Colonic mucosa (tissue), 4 donors: ENCODE measurements at regions of chr10 and their contacts with region 1.

Region 1: DNA sequence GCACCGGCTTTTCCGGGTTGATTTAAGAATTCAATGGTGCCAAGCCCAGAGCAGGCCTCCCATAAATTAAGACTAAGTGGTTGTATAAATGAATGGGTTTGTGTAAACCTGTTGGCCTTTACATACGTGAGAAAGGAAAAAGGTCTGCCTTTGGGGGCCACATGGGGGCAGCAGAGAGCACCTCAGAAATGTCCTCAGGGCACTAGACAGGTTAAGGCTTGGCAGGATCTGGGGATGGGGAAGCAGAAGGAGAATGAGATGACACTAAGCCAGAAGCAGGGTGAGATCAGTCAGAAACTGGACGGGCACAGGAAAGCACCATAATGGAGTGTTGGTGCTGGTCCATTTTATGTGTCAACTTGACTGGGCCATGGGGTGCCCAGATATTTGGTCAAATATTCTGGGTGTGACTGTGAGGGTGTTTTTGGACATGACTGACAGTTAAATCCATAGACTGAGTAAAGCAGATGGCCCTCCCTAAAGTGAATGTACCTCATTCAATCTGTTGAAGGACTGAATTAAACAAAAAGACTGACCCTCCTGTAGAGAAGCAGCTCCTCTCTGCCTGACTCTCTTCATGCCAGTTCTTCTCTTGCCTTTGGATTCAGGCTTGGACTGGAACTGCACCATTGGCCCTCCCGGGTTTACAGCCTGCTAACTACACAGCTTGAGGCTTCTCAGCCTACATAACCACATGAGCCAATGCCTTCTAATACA is 58.9 kb downstream of the FRMPD2 start:
- DNase-seq: peak; percentile 61
- H3K4me3 ChIP-seq: no peak overlapping the region
- H3K27ac ChIP-seq: no peak overlapping the region
- H3K4me1 ChIP-seq: no peaks in the 10 kb centered on the region
- H3K27me3 ChIP-seq: no peaks in the 10 kb centered on the region
- CTCF ChIP-seq: peak; percentile 60

Region 2: GRCh38 chr10:48289501-48290238 is 74.0 kb after region 1 on chr10:
- intact Hi-C with region 1: loop called (anchors 5 kb)
- DNase-seq: peak; percentile 50
- H3K4me3 ChIP-seq: no peak overlapping the region
- H3K27ac ChIP-seq: no peak overlapping the region
- H3K4me1 ChIP-seq: no peaks in the 10 kb centered on the region
- H3K27me3 ChIP-seq: no peaks in the 10 kb centered on the region
- CTCF ChIP-seq: peak; percentile 73

Region 3: DNA sequence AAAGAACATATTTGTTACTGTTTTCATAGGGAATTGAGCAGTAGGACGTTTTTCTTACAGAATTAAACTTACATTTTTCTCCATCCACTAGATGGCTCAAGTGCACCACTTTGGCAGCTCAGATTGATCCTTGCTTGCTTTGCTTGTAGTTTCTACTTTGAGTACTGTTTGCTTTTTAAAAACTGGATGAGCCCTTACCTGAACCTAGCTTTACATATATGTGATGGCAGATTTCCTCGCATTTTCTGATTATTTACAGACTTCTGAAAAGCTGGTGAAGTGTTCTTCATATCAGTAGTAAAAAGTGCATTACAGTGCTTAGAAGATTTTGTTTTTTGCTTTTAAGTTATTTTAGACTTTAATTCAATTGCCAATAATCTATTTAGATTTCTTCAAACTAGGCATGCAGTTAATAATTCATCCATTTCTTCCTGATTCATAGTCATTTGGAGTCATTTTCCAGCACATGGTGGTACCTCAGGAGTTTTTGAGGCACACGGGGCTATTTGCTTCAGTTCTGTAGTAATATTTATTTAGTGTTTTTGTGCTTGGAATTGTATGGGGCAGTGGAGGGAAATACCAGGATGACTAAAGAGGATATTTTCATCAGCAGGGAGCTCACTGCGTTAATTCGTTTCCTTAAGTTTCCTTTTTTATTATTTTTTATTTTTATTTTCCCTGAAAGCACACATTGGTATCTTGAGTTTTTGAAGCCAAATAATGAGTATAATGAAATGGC is 148.1 kb after region 1 on chr10:
- intact Hi-C with region 1: no loop called
- DNase-seq: peak; percentile 33
- H3K4me3 ChIP-seq: no peak overlapping the region
- H3K27ac ChIP-seq: no peak overlapping the region
- H3K4me1 ChIP-seq: peaks cover 5% of the 10 kb centered on the region
- H3K27me3 ChIP-seq: no peaks in the 10 kb centered on the region
- CTCF ChIP-seq: peak; percentile 57